PC-3 (cell line): ENCODE measurements at regions of chr9 and their contacts with region 1.

Region 1: GRCh38 chr9:136051517-136052432 is 43.3 kb downstream of the NACC2 start:
- DNase-seq: peak; percentile 88
- ATAC-seq: peak; percentile 78
- H3K4me3 ChIP-seq: peak overlapping the region; percentile 82
- H3K27ac ChIP-seq: peak overlapping the region; percentile 79
- H3K4me1 ChIP-seq: peaks cover 17% of the 10 kb centered on the region
- H3K27me3 ChIP-seq: no peaks in the 10 kb centered on the region
- CTCF ChIP-seq: no peak

Region 2: GRCh38 chr9:135961277-135961705 is 90.5 kb before region 1 on chr9 and contains the start of gene UBAC1:
- CTCF ChIA-PET with region 1: no interaction called
- POLR2A ChIA-PET with region 1: interaction called, 7 read pairs
- intact Hi-C with region 1: loop called (anchors 1 kb)
- DNase-seq: peak; percentile 92
- ATAC-seq: peak; percentile 83
- H3K4me3 ChIP-seq: peak within 1 kb of the TSS; percentile 96
- H3K27ac ChIP-seq: 0 out of 2 replicates have a peak within 1 kb of the TSS, but pooled peaks have one; percentile 16
- H3K4me1 ChIP-seq: peaks cover 10% of the 10 kb centered on the region
- H3K27me3 ChIP-seq: no peaks in the 10 kb centered on the region
- CTCF ChIP-seq: no peak
- total RNA-seq, gene UBAC1: 65.9 and 77.3 TPM in 2 replicates

Region 3: DNA sequence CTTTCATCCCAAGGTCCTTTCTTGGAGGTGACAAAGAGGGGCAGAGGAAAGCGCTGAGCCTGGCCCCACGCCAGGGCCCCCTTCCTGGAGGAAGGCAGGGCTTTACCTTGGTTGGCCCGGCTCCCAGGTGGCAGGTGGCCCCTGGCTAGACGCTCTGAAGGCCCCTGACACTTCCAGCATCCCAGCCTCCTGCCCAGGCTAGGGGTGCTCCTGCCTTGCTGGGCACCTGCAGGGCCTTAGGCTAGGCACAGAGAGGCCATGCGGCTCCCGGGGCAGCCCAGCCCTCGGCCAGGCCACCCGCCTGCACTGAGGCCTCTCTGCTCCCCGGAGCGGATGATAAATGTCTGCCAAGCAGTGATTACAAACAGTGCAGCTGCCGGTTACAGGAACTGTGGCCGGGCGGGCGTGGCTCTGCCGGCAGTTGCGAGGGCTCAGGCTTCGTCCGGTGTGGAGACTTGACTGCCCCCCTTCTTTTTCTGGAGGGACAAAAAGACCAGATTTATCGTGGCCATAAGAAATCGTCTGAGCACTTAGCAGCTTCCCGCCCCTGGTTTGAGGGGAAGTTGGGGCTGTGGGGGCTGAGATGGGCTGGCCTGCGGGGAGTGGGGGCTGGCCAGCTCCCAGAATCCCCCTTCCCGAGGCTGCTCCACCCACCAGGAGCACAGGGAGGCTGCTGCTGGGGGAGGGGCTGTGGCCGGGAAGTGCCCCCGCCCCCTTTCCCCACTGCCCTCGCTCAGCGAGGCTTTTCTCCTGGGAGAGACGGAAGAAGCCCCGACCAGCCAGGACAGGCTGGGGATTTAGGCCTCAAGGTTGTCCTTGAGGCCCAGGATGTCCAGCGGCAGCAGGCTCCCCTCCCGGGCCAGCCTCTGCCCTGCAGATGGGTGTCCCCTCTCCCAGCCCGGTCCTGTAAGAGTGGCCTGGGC is 59.0 kb before region 1 on chr9:
- CTCF ChIA-PET with region 1: no interaction called
- POLR2A ChIA-PET with region 1: no interaction called
- intact Hi-C with region 1: loop called (anchors 2 kb)
- DNase-seq: peak; percentile 69
- ATAC-seq: peak; percentile 84
- H3K4me3 ChIP-seq: peak overlapping the region; percentile 47
- H3K27ac ChIP-seq: peak overlapping the region; percentile 80
- H3K4me1 ChIP-seq: peaks cover 16% of the 10 kb centered on the region
- H3K27me3 ChIP-seq: no peaks in the 10 kb centered on the region
- CTCF ChIP-seq: no peak

Region 4: GRCh38 chr9:136075881-136076678 is 24.3 kb after region 1 on chr9:
- CTCF ChIA-PET with region 1: no interaction called
- POLR2A ChIA-PET with region 1: interaction called, 28 read pairs
- intact Hi-C with region 1: no loop called
- DNase-seq: no peak
- ATAC-seq: no peak
- H3K4me3 ChIP-seq: no peak overlapping the region
- H3K27ac ChIP-seq: no peak overlapping the region
- H3K4me1 ChIP-seq: no peaks in the 10 kb centered on the region
- H3K27me3 ChIP-seq: no peaks in the 10 kb centered on the region
- CTCF ChIP-seq: no peak